ENCODE measurements at regions of chr12 and their contacts with region 1.

Region 1: DNA sequence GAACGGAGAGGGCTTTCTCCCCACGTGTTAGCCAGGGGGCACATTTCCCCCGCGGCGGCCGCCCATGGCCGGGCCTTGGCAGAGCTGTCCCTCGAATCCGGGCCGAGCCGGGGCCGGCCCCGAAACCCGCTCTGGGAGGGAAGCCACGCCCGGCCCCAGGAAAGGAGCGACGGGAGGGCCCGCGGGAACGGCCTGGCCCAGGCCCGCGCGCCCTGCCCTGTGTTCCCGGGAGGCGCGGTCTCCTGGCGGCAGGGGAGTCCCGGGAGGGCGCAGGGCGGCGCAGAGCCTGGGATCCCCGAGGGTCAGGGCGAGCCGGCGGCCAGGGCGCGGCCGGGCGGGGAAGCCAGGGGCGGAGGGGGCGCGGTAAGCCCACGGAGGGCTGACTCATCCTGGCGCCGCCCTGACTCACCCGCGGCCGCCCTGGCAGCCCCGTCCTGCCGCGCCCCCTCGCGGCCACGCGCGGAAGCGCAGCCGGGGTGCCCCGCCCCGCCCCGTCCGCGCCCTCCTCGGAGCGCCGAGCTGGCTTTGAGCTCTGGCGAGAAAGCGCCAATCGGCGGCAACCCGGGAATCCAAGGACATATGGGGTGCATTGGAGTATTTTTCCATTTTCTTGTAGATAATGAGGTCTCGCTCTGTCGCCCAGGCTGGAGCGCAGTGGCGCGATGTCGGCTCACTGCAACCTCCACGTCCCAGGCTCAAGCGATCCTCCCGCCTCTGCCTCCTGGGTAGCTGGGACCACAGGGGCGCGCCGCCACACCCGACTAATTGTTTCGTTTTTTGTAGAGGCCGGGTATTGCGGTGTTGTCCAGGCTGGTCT is 31.8 kb upstream of the PLEKHG6 start:
- H3K4me3 ChIP-seq: peak overlapping the region; percentile 41
- H3K27ac ChIP-seq: peak overlapping the region; percentile 81
- H3K4me1 ChIP-seq: peaks cover 7% of the 10 kb centered on the region; the same call in 1 of the 2 replicates
- CTCF ChIP-seq: no peak

Region 2: GRCh38 chr12:6039894-6040568 is 238.6 kb before region 1 on chr12:
- CTCF ChIA-PET with region 1: interaction called, 16 read pairs
- POLR2A ChIA-PET with region 1: no interaction called
- H3K4me3 ChIP-seq: no peak overlapping the region
- H3K27ac ChIP-seq: no peak overlapping the region
- H3K4me1 ChIP-seq: no peaks in the 10 kb centered on the region
- CTCF ChIP-seq: peak; percentile 81

Region 3: DNA sequence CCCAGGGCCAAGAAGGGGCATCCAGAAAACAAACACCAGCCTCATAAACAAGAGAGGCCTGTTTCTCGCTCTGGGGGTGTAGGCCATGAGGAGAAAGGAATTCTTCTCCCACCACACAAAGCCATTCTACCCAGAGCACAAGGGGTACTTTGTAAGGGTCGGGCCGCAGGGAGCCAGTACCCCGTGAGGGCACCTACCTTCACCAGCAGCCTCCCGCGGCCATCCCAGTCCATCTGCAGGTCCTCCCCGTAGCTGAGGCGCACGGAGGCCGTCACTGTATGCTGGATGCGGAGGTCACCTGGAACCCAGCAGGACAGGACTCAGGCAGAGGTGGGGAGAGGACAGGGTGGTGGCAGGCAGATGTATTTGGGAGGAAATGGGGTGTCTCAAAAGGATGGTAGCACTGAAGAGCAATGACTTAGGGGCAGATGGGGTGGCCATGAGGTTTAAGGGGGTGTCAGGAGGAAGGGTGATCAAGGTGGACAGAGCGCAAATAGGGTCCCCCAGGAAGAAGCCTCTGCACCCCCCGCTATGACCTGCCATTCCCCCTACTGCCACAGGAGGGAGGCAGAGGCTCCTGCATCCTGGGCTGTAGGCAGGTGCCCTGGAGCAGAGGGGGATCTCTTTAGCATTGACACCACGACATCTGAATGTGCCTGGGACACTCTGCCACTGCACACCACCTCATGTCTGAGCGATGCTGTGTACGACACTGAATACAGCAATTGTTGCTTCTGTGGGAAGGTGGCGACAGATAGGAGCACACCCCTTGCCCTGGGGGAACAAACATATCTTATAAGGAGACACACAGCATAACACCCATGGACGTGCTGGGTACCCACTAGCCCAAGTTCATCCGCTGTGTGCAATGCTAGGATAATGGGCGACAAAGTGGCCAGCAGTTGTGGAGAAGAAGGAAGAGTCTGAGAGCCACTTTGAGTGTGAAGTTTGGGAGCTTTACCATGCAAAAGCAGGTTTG is 215.6 kb before region 1 on chr12:
- CTCF ChIA-PET with region 1: interaction called, 74 read pairs
- POLR2A ChIA-PET with region 1: no interaction called
- H3K4me3 ChIP-seq: no peak overlapping the region
- H3K27ac ChIP-seq: no peak overlapping the region
- H3K4me1 ChIP-seq: no peaks in the 10 kb centered on the region
- CTCF ChIP-seq: peak; percentile 85

Region 4: DNA sequence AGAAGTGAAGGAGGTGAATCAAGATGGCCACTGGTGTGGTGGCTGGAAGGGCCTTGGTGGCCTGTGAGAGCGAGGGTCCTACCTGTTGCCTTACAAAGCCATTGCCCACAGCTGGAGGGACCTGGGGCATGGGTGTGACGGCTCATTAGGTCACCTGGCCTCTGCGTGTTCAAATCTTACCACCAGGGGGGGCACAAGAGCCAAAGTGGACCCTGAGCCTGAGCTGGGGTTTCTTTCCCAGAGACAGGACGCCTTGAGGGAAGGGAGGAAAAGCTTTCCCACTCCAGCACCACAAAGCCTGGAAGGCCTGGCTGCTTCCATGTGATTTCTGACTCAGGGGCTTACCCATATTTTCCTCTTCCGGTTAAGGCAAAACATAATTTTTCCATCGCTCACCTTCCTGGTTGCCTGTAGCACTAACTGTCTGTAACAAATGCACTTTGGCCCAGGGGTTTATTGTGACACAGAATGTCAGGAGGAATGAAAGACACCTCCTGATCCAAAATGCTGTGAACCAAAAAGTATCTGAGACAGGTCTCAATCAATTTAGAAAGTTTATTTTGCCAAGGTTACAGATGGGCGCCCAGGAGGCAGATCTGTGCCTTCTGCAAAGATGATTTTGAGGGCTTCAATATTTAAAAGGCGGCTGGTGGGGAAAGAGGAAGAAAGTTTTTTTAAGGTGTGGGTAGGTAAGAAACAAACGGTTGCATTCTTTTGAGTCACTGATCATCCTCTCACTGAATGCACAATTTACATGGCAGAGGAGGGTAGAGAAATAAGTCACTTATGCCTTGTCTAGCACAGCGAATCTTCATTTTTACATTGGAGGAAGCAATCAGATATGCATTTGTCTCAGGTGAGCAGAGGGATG is 82.7 kb before region 1 on chr12:
- CTCF ChIA-PET with region 1: interaction called, 143 read pairs
- POLR2A ChIA-PET with region 1: interaction called, 8 read pairs
- H3K4me3 ChIP-seq: no peak overlapping the region
- H3K27ac ChIP-seq: no peak overlapping the region
- H3K4me1 ChIP-seq: no peaks in the 10 kb centered on the region
- CTCF ChIP-seq: peak; percentile 81

Region 5: DNA sequence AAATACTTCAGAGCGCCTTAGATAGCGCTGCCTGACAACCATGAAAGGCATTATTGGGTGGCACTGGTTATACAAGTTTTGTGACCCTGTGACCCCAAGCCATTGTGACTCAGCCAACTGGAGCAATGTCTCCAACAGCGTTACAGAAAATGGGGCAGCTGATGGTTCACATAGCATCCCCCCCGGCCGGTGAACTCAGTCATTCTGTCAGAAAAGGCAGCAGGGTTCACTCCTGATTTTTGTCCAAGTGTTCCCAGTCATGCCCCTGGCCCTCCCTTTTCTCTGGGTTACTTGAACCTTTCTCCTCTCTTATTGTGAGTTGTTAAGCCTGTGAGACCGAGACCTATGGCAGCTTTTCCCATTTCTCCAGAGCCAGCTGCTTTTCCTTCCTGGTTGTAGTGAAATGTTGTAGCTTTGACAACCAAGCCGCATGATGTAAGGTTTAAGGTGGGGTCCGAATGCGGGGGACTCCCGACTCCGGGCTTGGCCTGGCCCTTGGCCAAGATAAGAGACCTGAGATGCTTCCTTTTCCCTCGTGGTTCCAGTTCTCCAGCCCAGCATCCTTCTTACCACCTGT is 56.5 kb before region 1 on chr12:
- CTCF ChIA-PET with region 1: interaction called, 12 read pairs
- POLR2A ChIA-PET with region 1: no interaction called
- H3K4me3 ChIP-seq: no peak overlapping the region
- H3K27ac ChIP-seq: no peak overlapping the region
- H3K4me1 ChIP-seq: no peaks in the 10 kb centered on the region
- CTCF ChIP-seq: no peak

Region 6: DNA sequence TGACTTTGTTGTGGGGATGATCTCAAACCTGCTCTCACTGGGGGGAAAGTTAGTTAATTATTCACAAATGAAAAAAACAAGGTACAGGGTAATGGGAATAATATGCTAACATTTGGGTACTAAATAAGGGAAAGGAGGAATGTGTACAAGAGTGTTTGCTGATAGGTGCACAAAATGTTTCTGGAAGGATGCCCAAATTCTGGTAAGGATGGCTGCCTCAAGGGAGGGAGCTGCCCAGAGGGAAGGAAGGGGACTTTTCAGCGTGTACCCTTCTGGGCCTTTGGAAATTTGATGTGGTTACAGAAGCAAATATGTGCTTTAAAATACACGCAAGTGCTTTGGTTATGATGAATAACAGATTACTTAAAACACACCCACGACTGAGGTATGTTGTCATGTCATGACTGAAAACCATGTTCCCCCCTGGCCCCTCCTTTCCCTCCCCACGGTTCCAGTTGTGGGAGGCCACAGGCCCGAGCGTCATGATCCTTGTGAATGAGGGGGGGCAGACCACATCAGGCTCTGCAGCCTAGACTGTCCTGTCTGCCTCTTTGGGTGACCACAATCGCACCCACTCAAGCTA is 11.4 kb before region 1 on chr12:
- CTCF ChIA-PET with region 1: interaction called, 20 read pairs
- POLR2A ChIA-PET with region 1: no interaction called
- H3K4me3 ChIP-seq: no peak overlapping the region
- H3K27ac ChIP-seq: no peak overlapping the region
- H3K4me1 ChIP-seq: peaks cover 6% of the 10 kb centered on the region
- CTCF ChIP-seq: no peak

Measured in HEK293 (cell line).